T-cell (primary cell): ENCODE measurements at regions of chr14 and their contacts with region 1.

Region 1: DNA sequence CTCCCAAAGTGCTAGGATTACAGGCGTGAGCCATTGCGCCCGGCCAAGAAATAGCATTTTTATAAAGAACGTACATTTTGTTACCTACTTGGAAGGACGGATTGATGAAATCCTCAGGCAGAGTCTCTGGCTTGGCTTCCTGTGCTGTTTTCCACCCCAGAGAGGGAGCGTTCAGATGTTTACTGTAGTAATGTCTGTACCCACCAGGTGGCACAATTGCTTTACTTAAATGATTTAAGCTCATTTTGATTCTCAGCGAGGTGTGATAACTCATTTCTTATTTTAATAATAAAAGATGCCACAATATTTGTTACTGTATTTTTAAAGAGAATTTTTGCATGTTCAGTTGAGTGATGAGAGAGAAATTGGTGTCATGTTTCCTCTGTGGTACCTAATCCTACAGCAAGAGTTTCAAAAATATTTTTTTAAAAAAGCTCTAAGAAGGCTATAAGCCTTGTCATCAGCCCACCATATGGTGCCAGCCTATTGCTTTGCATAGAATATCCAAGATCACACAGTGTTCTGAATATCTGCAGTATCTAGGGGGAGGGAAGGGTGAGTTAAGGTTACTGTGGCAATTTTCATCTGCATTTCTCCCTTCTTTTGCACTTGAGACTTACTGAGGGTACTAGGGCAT is 82.6 kb upstream of the TRAF3 start:
- DNase-seq: peak in 33 of 35 experiments; percentile 16 to 81 (median 40)
- ATAC-seq: peak; percentile 63 to 74 (median 69)
- H3K4me3 ChIP-seq: no peak overlapping the region
- H3K4me3 Mint-ChIP-seq: no peak overlapping the region
- H3K27ac ChIP-seq: no peak overlapping the region
- H3K27ac Mint-ChIP-seq: no peak overlapping the region
- H3K4me1 ChIP-seq: peaks cover 0 to 9% of the 10 kb centered on the region in 2 experiments
- H3K4me1 Mint-ChIP-seq: peaks cover 26 to 35% (median 29%) of the 10 kb centered on the region in 3 donors
- H3K27me3 ChIP-seq: no peaks in the 10 kb centered on the region
- H3K27me3 Mint-ChIP-seq: no peaks in the 10 kb centered on the region

Region 2: GRCh38 chr14:102555264-102555831 is 139.3 kb before region 1 on chr14:
- CTCF ChIA-PET with region 1: no interaction called
- POLR2A ChIA-PET with region 1: no interaction called
- DNase-seq: peak; percentile 4 to 73 (median 51)
- ATAC-seq: peak; percentile 88 to 95 (median 90)
- H3K4me3 ChIP-seq: peak overlapping the region; percentile 70 to 74
- H3K4me3 Mint-ChIP-seq: peak overlapping the region; percentile 69 to 74 (median 74)
- H3K27ac ChIP-seq: peak overlapping the region; percentile 80
- H3K27ac Mint-ChIP-seq: peak overlapping the region in 1 of 2 donors; percentile 69
- H3K4me1 ChIP-seq: peaks cover 3 to 13% of the 10 kb centered on the region in 2 experiments
- H3K4me1 Mint-ChIP-seq: peaks cover 0 to 5% (median 2%) of the 10 kb centered on the region in 3 donors
- H3K27me3 ChIP-seq: peaks cover 0 to 18% of the 10 kb centered on the region in 2 experiments
- H3K27me3 Mint-ChIP-seq: peaks cover 2% of the 10 kb centered on the region in 2 donors

Region 3: DNA sequence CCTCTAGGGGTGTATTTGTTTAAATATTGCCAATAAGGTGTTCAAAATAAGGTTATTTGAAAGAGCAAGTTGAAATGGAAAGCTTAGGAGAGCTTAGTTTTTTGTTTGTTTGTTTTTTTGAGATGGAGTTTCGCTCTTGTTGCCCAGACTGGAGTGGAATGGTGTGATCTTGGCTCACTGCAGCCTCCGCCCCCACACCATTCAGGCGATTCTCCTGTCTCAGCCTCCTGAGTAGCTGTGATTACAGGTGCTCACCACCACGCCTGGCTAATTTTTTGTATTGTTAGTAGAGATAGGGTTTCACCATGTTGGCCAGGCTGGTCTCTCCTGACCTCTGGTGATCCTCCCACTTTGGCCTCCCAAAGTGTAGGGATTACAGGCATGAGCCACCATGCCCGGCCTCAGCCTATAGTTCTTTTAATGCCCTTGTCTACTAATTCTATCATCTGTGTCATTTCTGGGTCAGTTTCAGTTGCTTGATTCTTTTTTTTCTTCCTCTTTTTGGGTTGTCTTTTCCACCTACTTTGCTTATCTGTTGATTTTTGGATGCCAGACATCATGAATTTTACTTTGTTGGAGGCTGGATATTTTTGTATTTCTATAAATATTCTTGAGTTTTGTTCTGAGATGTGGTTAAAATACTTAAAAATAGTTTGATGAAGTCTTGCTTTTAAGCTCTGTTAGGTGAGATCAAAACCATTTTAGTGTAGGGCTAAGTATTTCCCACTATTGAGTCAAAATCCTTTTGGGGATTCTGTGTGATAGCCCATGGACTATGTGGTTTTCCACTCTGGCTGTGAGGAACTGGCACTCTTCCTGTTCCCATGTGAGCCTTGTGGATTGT is 83.5 kb before region 1 on chr14:
- CTCF ChIA-PET with region 1: no interaction called
- POLR2A ChIA-PET with region 1: no interaction called
- DNase-seq: no peak
- ATAC-seq: no peak
- H3K4me3 ChIP-seq: no peak overlapping the region
- H3K4me3 Mint-ChIP-seq: no peak overlapping the region
- H3K27ac ChIP-seq: no peak overlapping the region
- H3K27ac Mint-ChIP-seq: no peak overlapping the region
- H3K4me1 ChIP-seq: peaks cover 0 to 3% of the 10 kb centered on the region in 2 experiments
- H3K4me1 Mint-ChIP-seq: peaks cover 24 to 26% (median 24%) of the 10 kb centered on the region in 3 donors
- H3K27me3 ChIP-seq: no peaks in the 10 kb centered on the region
- H3K27me3 Mint-ChIP-seq: no peaks in the 10 kb centered on the region

Region 4: DNA sequence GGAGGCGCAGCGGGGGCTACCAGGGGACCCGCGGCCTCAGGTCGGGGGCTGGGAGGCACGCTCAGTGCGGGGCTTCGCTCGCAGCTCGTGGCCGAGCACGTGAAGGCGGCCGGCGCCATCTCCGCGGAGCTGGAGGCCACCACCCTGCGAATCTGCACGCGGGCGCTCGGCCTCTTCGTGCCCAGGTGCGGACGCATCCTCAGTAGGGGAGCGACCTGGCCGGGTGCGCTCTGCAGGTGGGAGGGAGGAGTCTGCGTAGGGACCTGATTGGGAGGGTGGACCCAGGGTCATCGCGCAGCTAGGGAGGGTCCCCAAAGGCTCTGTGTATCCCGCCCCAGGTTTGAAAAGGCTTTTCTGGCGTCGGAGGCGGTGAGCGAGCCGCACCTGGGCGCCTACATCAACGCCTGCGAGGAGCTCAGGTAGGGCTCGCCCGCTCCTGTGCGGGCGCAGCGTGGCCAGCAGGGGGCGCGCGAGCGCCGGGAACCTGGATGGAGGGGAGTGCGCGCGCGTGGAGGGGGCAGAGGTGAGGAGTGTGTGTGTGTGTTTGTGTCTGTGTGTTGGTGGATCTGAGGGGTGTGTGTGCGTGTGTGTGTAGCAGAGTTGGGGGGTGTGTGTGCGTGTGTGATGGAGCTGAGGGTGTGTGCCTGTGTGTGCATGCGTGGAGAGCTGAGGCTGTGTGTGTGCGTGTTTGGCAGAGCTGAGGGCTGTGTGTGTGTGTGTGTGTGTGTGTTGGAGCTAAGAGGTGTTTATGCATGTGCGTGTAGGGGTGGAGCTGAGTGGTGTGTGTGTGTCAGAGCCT is 410.2 kb after region 1 on chr14:
- CTCF ChIA-PET with region 1: interaction called in 1 of 2 experiments, 11 read pairs
- POLR2A ChIA-PET with region 1: no interaction called
- DNase-seq: peak; percentile 47 to 78 (median 70)
- ATAC-seq: peak; percentile 86 to 95 (median 91)
- H3K4me3 ChIP-seq: no peak overlapping the region
- H3K4me3 Mint-ChIP-seq: peak overlapping the region in 1 of 3 donors; percentile 19
- H3K27ac ChIP-seq: no peak overlapping the region
- H3K27ac Mint-ChIP-seq: no peak overlapping the region
- H3K4me1 ChIP-seq: peaks cover 0 to 14% of the 10 kb centered on the region in 2 experiments
- H3K4me1 Mint-ChIP-seq: peaks cover 11 to 17% (median 12%) of the 10 kb centered on the region in 3 donors
- H3K27me3 ChIP-seq: peaks cover 0 to 87% of the 10 kb centered on the region in 2 experiments
- H3K27me3 Mint-ChIP-seq: peaks cover 27 to 49% of the 10 kb centered on the region in 2 donors

Region 5: GRCh38 chr14:103141119-103141796 is 446.6 kb after region 1 on chr14:
- CTCF ChIA-PET with region 1: no interaction called
- POLR2A ChIA-PET with region 1: no interaction called
- DNase-seq: peak in 7 of 35 experiments; percentile 6 to 36 (median 20)
- ATAC-seq: no peak
- H3K4me3 ChIP-seq: no peak overlapping the region
- H3K4me3 Mint-ChIP-seq: no peak overlapping the region
- H3K27ac ChIP-seq: no peak overlapping the region
- H3K27ac Mint-ChIP-seq: no peak overlapping the region
- H3K4me1 ChIP-seq: no peaks in the 10 kb centered on the region
- H3K4me1 Mint-ChIP-seq: peaks cover 0 to 6% (median 5%) of the 10 kb centered on the region in 3 donors
- H3K27me3 ChIP-seq: peaks cover 0 to 40% of the 10 kb centered on the region in 2 experiments
- H3K27me3 Mint-ChIP-seq: peaks cover 32 to 56% of the 10 kb centered on the region in 2 donors

Region 6: GRCh38 chr14:103292426-103293374 is 598.1 kb after region 1 on chr14:
- CTCF ChIA-PET with region 1: interaction called in 1 of 2 experiments, 10 read pairs
- POLR2A ChIA-PET with region 1: no interaction called
- DNase-seq: peak; percentile 25 to 82 (median 62)
- ATAC-seq: peak; percentile 79 to 94 (median 88)
- H3K4me3 ChIP-seq: no peak overlapping the region
- H3K4me3 Mint-ChIP-seq: no peak overlapping the region
- H3K27ac ChIP-seq: no peak overlapping the region
- H3K27ac Mint-ChIP-seq: no peak overlapping the region
- H3K4me1 ChIP-seq: no peaks in the 10 kb centered on the region
- H3K4me1 Mint-ChIP-seq: peaks cover 2 to 8% (median 3%) of the 10 kb centered on the region in 3 donors
- H3K27me3 ChIP-seq: peaks cover 0 to 32% of the 10 kb centered on the region in 2 experiments
- H3K27me3 Mint-ChIP-seq: peaks cover 20 to 21% of the 10 kb centered on the region in 2 donors